ENCODE measurements at regions of chr2 and their contacts with region 1.

Region 1: GRCh38 chr2:227817850-227818674 is 4.4 kb downstream of the CCL20 start:
- DNase-seq: peak; percentile 97
- H3K4me3 Mint-ChIP-seq: no peak overlapping the region
- H3K27ac Mint-ChIP-seq: peak overlapping the region; percentile 80
- H3K4me1 Mint-ChIP-seq: peaks cover 34% of the 10 kb centered on the region
- H3K27me3 Mint-ChIP-seq: peaks cover 11% of the 10 kb centered on the region

Region 2: GRCh38 chr2:226963528-226963927 is 854.5 kb before region 1 on chr2:
- CTCF ChIA-PET with region 1: no interaction called
- intact Hi-C with region 1: no loop called
- DNase-seq: no peak
- H3K4me3 Mint-ChIP-seq: no peak overlapping the region
- H3K27ac Mint-ChIP-seq: no peak overlapping the region
- H3K4me1 Mint-ChIP-seq: no peaks in the 10 kb centered on the region
- H3K27me3 Mint-ChIP-seq: no peaks in the 10 kb centered on the region

Region 3: DNA sequence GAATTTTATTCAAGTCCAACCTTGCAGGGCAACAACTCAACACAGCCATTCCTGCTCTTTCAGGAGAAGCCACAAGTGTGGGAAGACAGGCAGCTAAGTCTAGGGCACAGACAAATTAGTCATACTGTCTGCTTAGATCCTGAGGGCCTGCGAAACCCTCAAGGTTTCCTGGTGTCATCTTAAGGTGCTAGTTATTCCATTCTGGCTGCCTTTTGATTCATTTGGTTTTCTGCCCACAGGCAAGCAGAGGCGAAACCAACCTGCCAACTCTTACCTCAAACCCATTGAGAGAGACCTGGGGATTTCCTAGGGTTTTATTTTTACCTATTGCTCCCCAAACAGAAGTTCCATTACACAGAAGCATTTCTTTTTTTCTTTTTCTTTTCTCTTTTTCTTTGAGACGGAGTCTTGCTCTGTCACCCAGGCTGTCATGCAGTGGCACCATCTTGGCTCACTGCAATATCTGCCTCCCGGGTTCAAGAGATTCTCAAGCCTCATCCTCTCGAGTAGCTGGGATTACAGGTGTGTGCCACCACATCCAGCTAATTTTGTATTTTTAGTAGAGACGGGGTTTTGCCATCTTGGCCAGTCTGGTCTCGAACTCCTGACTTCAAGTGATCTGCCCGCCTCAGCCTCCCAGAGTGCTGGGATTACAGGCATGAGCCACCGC is 406.6 kb before region 1 on chr2:
- CTCF ChIA-PET with region 1: no interaction called
- intact Hi-C with region 1: loop called (anchors 1 kb)
- DNase-seq: peak; percentile 83
- H3K4me3 Mint-ChIP-seq: peak overlapping the region; percentile 51
- H3K27ac Mint-ChIP-seq: peak overlapping the region; percentile 96
- H3K4me1 Mint-ChIP-seq: peaks cover 76% of the 10 kb centered on the region
- H3K27me3 Mint-ChIP-seq: no peaks in the 10 kb centered on the region

Region 4: GRCh38 chr2:227479865-227480475 is 338.1 kb before region 1 on chr2:
- CTCF ChIA-PET with region 1: no interaction called
- intact Hi-C with region 1: loop called (anchors 5 kb)
- DNase-seq: no peak
- H3K4me3 Mint-ChIP-seq: peak overlapping the region; percentile 17
- H3K27ac Mint-ChIP-seq: peak overlapping the region; percentile 82
- H3K4me1 Mint-ChIP-seq: peaks cover 81% of the 10 kb centered on the region
- H3K27me3 Mint-ChIP-seq: no peaks in the 10 kb centered on the region

Region 5: DNA sequence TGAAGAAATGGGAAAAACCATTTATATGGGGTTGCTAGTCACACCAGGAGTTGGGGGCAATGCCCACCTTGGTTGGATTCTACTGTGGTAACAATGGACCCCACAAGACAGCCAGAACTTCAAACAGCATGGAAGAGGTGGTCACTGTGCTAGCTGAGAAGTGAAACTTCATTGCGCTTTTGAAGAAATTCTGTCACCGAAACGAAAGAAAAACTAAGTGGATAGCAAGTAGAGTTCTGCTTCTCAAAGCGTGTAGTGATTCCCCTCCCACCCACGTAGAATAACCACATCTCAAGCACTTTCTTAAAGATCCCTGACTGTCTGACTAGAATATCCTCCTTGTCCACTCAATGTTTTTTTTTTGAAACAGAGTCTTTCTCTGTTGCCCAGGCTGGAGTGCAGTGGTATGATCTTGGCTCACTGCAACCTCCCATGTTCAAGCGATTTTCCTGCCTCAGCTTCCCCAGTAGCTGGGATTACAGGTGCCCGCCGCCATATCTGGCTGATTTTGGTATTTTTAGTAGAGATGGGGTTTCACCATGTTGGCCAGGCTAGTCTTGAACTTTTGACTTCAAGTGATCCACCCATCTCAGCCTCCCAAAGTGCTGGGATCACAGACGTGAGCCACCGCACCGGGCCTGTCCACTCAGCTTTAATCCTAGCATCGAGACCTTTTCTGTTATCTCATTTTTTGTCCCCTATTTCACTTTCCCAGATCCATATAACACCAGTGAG is 34.5 kb before region 1 on chr2:
- CTCF ChIA-PET with region 1: no interaction called
- intact Hi-C with region 1: loop called (anchors 1 kb)
- DNase-seq: no peak
- H3K4me3 Mint-ChIP-seq: peak overlapping the region; percentile 49
- H3K27ac Mint-ChIP-seq: no peak overlapping the region
- H3K4me1 Mint-ChIP-seq: peaks cover 10% of the 10 kb centered on the region
- H3K27me3 Mint-ChIP-seq: peaks cover 6% of the 10 kb centered on the region

Region 6: DNA sequence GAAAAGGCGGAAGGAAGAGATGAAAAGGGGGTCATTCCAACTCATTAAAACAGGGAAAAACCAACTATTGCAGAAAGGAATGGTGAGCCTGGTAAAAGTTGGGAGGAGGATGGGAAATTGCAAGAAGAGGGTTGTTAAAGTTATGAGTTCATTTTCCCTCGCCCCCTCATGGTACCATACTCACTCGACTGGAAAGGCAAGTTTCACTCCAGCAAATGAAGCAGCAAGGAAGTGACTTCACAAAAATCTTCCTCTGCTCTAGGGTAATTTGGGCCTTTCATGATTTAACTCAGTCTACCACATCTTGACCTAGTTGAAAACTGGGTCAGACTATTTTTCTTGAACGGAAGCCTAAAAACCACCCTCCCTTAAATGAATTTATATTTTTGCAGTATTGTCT is 30.5 kb after region 1 on chr2:
- CTCF ChIA-PET with region 1: no interaction called
- intact Hi-C with region 1: loop called (anchors 1 kb)
- DNase-seq: no peak
- H3K4me3 Mint-ChIP-seq: no peak overlapping the region
- H3K27ac Mint-ChIP-seq: peak overlapping the region; percentile 37
- H3K4me1 Mint-ChIP-seq: peaks cover 12% of the 10 kb centered on the region
- H3K27me3 Mint-ChIP-seq: peaks cover 7% of the 10 kb centered on the region

Measured in activated naive CD4-positive, alpha-beta T cell treated with anti-CD3 and anti-CD28 coated beads for 36 hours (primary cell).